ENCODE measurements at regions of chr5 and their contacts with region 1.

Region 1: DNA sequence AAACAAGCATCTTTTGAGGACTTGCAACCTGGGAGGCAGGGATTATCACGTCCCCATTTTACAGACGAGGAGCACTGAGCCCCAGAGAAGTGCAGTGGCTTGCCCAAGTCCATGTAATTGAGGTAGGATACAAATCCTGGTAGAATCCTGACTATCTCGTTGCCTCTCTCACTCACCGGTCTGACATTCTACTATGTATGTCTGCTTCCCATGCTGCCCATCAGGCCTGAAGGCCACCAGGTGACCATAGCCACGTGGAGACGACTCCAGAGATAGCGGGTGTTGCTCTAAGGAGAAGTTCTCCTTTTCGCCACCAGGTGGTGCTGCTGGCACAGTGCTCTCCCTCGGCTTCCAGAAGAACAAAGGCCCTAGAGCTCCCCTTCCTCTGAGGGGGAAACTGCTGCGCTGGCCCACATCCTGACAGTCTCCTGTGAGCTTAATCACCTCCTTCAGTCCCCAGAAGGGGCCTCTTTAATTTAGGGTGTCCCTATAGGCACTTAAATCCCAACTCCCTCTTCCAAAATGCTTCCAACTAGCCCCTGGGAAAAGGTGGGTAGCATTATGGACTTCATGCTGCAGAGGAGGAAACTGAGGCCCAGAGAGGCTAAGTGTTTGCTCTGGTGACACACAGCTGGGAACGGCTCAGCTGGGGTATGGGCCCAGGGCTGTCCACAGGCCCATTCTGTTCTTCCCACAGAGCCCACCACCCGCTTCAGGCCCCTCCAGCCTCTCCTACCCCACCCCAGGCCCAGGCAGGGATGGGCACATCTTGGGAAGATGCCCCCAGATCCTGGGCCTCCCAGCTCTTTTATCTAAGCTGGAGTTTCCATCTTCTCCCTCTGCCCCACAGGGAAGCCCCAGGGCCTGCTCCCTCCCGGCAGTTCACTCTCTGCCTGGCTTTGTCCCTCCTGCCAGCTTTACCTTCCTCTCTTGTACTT is 6.4 kb downstream of the SLC34A1 start:
- DNase-seq: peak; percentile 86 to 89 (median 88)
- H3K4me3 ChIP-seq: no peak overlapping the region
- H3K4me3 Mint-ChIP-seq: peak overlapping the region in 7 of 8 donors; percentile 68 to 88 (median 79)
- H3K27ac ChIP-seq: peak overlapping the region; percentile 71
- H3K27ac Mint-ChIP-seq: peak overlapping the region; percentile 79 to 98 (median 96)
- H3K4me1 ChIP-seq: peaks cover 49% of the 10 kb centered on the region
- H3K4me1 Mint-ChIP-seq: peaks cover 31 to 58% (median 38%) of the 10 kb centered on the region in 4 donors
- H3K27me3 ChIP-seq: no peaks in the 10 kb centered on the region
- H3K27me3 Mint-ChIP-seq: no peaks in the 10 kb centered on the region

Region 2: DNA sequence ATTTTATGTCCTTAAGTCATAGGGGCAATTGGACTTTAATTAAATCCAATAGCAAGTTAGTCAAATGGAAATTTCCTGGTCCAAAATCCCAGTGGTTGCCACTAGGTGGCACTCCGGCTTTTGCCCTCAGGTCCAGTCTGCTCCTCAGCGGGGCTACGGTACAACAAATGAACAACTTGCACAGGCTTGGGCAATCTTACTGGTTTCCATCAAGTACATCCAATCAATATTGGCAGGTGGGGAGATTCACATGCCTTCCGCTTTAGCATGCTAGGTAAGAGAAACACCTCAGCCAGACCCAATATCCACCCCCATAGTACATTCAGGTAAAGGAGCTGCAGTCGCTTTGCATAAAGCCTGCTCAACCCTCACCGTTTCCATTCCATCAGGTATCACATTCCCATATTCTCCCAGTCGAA is 72.7 kb before region 1 on chr5:
- CTCF ChIA-PET with region 1: interaction called, 63 read pairs
- POLR2A ChIA-PET with region 1: interaction called, 3 read pairs
- intact Hi-C with region 1: loop called (anchors 1 kb)
- DNase-seq: peak; percentile 68 to 73 (median 69)
- H3K4me3 ChIP-seq: no peak overlapping the region
- H3K4me3 Mint-ChIP-seq: no peak overlapping the region
- H3K27ac ChIP-seq: no peak overlapping the region
- H3K27ac Mint-ChIP-seq: peak overlapping the region in 2 of 7 donors; percentile 10 to 34
- H3K4me1 ChIP-seq: peaks cover 15% of the 10 kb centered on the region
- H3K4me1 Mint-ChIP-seq: peaks cover 8 to 36% (median 20%) of the 10 kb centered on the region in 4 donors
- H3K27me3 ChIP-seq: no peaks in the 10 kb centered on the region
- H3K27me3 Mint-ChIP-seq: no peaks in the 10 kb centered on the region

Region 3: GRCh38 chr5:177357459-177358351 is 32.9 kb before region 1 on chr5 and contains the start of gene RGS14:
- CTCF ChIA-PET with region 1: interaction called, 25 read pairs
- POLR2A ChIA-PET with region 1: interaction called, 39 read pairs
- intact Hi-C with region 1: loop called (anchors 5 kb)
- DNase-seq: peak; percentile 85 to 91 (median 87)
- H3K4me3 ChIP-seq: peak within 1 kb of the TSS; percentile 92 to 95
- H3K4me3 Mint-ChIP-seq: peak within 1 kb of the TSS; percentile 84 to 97 (median 90)
- H3K27ac ChIP-seq: peak within 1 kb of the TSS; percentile 75
- H3K27ac Mint-ChIP-seq: peak within 1 kb of the TSS; percentile 89 to 97 (median 97)
- H3K4me1 ChIP-seq: peaks cover 71% of the 10 kb centered on the region
- H3K4me1 Mint-ChIP-seq: peaks cover 53 to 92% (median 73%) of the 10 kb centered on the region in 4 donors
- H3K27me3 ChIP-seq: no peaks in the 10 kb centered on the region
- H3K27me3 Mint-ChIP-seq: no peaks in the 10 kb centered on the region
- total RNA-seq, gene RGS14: 167 to 168 TPM

Region 4: GRCh38 chr5:177370488-177371119 is 20.0 kb before region 1 on chr5:
- CTCF ChIA-PET with region 1: interaction called, 140 read pairs
- POLR2A ChIA-PET with region 1: interaction called, 69 read pairs
- intact Hi-C with region 1: loop called (anchors 2 kb)
- DNase-seq: peak in 3 of 5 donors; percentile 65 to 81 (median 79)
- H3K4me3 ChIP-seq: no peak overlapping the region
- H3K4me3 Mint-ChIP-seq: peak overlapping the region in 5 of 8 donors; percentile 15 to 80 (median 61)
- H3K27ac ChIP-seq: peak overlapping the region; percentile 28
- H3K27ac Mint-ChIP-seq: peak overlapping the region in 4 of 7 donors; percentile 64 to 88 (median 70)
- H3K4me1 ChIP-seq: peaks cover 85% of the 10 kb centered on the region
- H3K4me1 Mint-ChIP-seq: peaks cover 47 to 78% (median 62%) of the 10 kb centered on the region in 4 donors
- H3K27me3 ChIP-seq: no peaks in the 10 kb centered on the region
- H3K27me3 Mint-ChIP-seq: no peaks in the 10 kb centered on the region

Region 5: DNA sequence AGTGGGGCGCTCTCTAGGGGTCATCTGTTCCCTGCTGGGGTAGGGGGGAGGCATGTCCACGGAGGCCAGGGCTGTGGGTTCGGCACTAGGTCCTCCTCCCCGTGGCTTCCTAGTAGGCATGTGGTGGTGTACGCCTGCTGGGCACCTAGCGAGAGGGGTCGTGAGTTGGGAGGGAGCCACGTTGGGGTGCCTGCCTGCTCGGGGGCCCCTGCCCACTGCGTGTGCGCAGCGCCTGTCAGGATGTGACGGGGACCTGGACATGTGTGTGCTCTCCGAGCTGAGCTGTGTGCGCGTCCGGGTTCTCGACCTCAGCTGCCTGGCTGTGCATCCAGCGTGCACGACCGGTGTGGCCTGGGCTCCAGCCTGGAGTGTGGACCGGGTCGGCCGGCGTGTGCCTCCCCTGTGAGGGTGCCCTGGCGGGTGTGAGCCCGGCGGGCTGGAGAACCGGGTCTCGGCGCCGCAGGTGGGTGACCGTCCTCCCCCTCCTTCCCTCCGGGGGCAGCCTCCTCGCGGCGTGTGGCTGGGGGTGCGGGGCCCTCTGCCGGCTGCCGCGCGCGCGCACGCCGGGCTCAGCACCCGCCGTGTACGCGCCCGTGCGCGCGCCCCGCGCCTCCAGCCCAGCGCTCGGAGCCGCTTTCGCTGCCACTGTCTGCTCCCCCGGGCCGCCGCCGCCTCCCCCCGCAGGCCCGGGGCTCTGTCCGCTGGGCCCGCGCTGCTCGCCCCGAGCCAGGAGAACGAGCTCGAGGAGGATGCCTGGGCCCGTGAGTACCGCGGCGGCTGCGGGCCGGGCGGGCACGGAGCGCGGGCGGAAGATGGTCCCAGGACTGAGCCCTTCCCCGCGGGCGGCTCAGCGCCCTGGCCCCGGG is 55.8 kb after region 1 on chr5 and contains the start of gene PRR7:
- CTCF ChIA-PET with region 1: interaction called, 271 read pairs
- POLR2A ChIA-PET with region 1: interaction called, 86 read pairs
- intact Hi-C with region 1: no loop called
- DNase-seq: peak; percentile 77 to 85 (median 82)
- H3K4me3 ChIP-seq: peak within 1 kb of the TSS in 1 of 2 donors; percentile 50
- H3K4me3 Mint-ChIP-seq: peak within 1 kb of the TSS; percentile 81 to 90 (median 85)
- H3K27ac ChIP-seq: peak within 1 kb of the TSS; percentile 94
- H3K27ac Mint-ChIP-seq: peak within 1 kb of the TSS; percentile 95 to 99 (median 97)
- H3K4me1 ChIP-seq: peaks cover 51% of the 10 kb centered on the region
- H3K4me1 Mint-ChIP-seq: peaks cover 25 to 53% (median 41%) of the 10 kb centered on the region in 4 donors
- H3K27me3 ChIP-seq: no peaks in the 10 kb centered on the region
- H3K27me3 Mint-ChIP-seq: no peaks in the 10 kb centered on the region
- total RNA-seq, gene PRR7: 5.2 to 7.2 TPM